Mammary epithelial cell (primary cell): ENCODE measurements at regions of chr16 and their contacts with region 1.

Region 1: GRCh38 chr16:25051406-25052150 is 36.4 kb upstream of the ARHGAP17 start:
- DNase-seq: peak; percentile 68
- H3K4me3 ChIP-seq: no peak overlapping the region
- H3K27ac ChIP-seq: no peak overlapping the region
- H3K4me1 ChIP-seq: peaks cover 28% of the 10 kb centered on the region
- H3K27me3 ChIP-seq: no peaks in the 10 kb centered on the region
- CTCF ChIP-seq: no peak

Region 2: GRCh38 chr16:25111403-25112166 is 60.0 kb after region 1 on chr16 and contains the start of gene LCMT1:
- CTCF ChIA-PET with region 1: no interaction called
- dilution Hi-C with region 1: loop called (anchors 5 kb)
- in situ Hi-C with region 1: loop called in 1 of 2 experiments (anchors 5 kb)
- intact Hi-C with region 1: loop called (anchors 1 kb)
- DNase-seq: peak; percentile 97
- H3K4me3 ChIP-seq: peak within 1 kb of the TSS; percentile 79 to 97 (median 89)
- H3K27ac ChIP-seq: peak within 1 kb of the TSS; percentile 72
- H3K4me1 ChIP-seq: peaks cover 30% of the 10 kb centered on the region
- H3K27me3 ChIP-seq: no peaks in the 10 kb centered on the region
- CTCF ChIP-seq: no peak
- total RNA-seq, gene LCMT1: 30.5 to 43.0 TPM

Region 3: GRCh38 chr16:25126820-25127232 is 75.2 kb after region 1 on chr16:
- CTCF ChIA-PET with region 1: no interaction called
- dilution Hi-C with region 1: no loop called
- in situ Hi-C with region 1: loop called in 1 of 2 experiments (anchors 10 kb)
- intact Hi-C with region 1: loop called (anchors 1 kb)
- DNase-seq: peak; percentile 93
- H3K4me3 ChIP-seq: no peak overlapping the region
- H3K27ac ChIP-seq: peak overlapping the region; percentile 61
- H3K4me1 ChIP-seq: peaks cover 15% of the 10 kb centered on the region
- H3K27me3 ChIP-seq: no peaks in the 10 kb centered on the region
- CTCF ChIP-seq: peak; percentile 81 to 96

Region 4: DNA sequence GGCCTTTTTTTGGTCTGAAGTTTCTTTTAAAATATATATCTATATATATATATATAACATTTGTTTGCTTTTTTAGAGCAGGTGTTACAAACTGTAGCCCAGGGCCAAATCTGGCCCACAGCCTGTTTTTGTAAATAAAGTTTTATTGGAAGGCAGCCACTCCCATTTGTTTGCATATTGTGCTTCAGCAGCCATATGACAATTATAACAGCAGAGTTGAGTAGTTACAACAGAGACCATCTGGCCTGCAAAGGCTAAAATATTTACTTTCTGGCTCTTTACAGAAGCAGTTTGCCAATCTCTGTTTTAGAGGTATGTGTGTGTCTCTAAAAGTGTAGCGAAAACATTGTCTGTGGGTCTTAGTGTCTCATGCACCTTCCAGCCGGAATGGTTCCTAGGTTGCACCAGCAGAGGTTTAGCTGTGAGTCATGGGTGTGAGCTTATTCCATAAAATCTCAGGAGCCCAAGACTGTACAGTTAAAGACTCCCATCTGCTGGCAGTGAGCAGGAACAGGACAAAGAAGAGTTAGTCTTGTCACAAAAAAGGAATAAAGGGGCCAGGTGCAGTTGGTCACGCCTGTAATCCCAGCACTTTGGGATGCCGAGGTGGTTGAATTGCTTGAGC is 83.8 kb after region 1 on chr16:
- CTCF ChIA-PET with region 1: no interaction called
- dilution Hi-C with region 1: no loop called
- in situ Hi-C with region 1: loop called in 1 of 2 experiments (anchors 10 kb)
- intact Hi-C with region 1: loop called (anchors 2 kb)
- DNase-seq: peak; percentile 48
- H3K4me3 ChIP-seq: no peak overlapping the region
- H3K27ac ChIP-seq: no peak overlapping the region
- H3K4me1 ChIP-seq: no peaks in the 10 kb centered on the region
- H3K27me3 ChIP-seq: no peaks in the 10 kb centered on the region
- CTCF ChIP-seq: peak; percentile 16 to 39

Region 5: GRCh38 chr16:25235991-25236390 is 184.4 kb after region 1 on chr16:
- CTCF ChIA-PET with region 1: no interaction called
- dilution Hi-C with region 1: no loop called
- in situ Hi-C with region 1: no loop called
- intact Hi-C with region 1: loop called (anchors 2 kb)
- DNase-seq: no peak
- H3K4me3 ChIP-seq: no peak overlapping the region
- H3K27ac ChIP-seq: no peak overlapping the region
- H3K4me1 ChIP-seq: no peaks in the 10 kb centered on the region
- H3K27me3 ChIP-seq: no peaks in the 10 kb centered on the region
- CTCF ChIP-seq: no peak